GM12878 (cell line): ENCODE measurements at regions of chr4 and their contacts with region 1.

Region 1: GRCh38 chr4:80125252-80126177 is 52.5 kb upstream of the ANTXR2 start:
- DNase-seq: no peak
- ATAC-seq: peak; percentile 78
- H3K4me3 ChIP-seq: no peak overlapping the region
- H3K27ac ChIP-seq: no peak overlapping the region
- H3K4me1 ChIP-seq: no peaks in the 10 kb centered on the region
- H3K27me3 ChIP-seq: no peaks in the 10 kb centered on the region
- CTCF ChIP-seq: peak; percentile 36 to 42 (median 37); a peak in 5 of 6 replicates
- EP300 ChIP-seq: no peak
- POLR2A ChIP-seq: no peak
- RAD21 ChIP-seq: peak; percentile 37

Region 2: DNA sequence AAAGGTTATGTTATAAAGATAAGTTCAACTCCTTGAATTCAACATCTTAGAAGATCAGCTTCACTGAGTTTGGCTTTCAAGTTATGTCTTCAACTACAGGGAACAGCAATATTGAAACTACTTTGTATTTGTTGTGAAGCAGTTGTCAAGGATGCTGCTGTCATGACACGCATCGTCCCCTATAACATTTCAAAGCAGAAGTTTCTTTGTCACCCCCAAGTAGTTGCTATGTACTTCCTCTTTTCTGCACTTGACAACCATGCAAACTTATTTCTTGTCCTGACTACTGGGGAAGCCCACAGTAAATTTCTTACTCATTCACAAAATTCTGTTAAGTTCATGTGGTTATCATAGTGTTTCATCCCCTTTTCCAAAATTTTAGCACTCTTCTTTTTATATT is 66.8 kb before region 1 on chr4:
- CTCF ChIA-PET with region 1: interaction called, 12 read pairs
- POLR2A ChIA-PET with region 1: no interaction called
- RAD21 ChIA-PET with region 1: interaction called, 5 read pairs
- SMC1A ChIA-PET with region 1: interaction called, 6 read pairs
- in situ Hi-C with region 1: no loop called
- intact Hi-C with region 1: no loop called
- DNase-seq: peak; percentile 89
- ATAC-seq: peak; percentile 98
- H3K4me3 ChIP-seq: peak overlapping the region; percentile 42; the same call in 1 of the 2 replicates
- H3K27ac ChIP-seq: peak overlapping the region; percentile 54
- H3K4me1 ChIP-seq: peaks cover 13% of the 10 kb centered on the region
- H3K27me3 ChIP-seq: no peaks in the 10 kb centered on the region
- CTCF ChIP-seq: no peak
- EP300 ChIP-seq: peak; percentile 96 to 100
- POLR2A ChIP-seq: no peak
- RAD21 ChIP-seq: no peak

Region 3: GRCh38 chr4:80072744-80073472 is 52.6 kb before region 1 on chr4 and contains the start of gene ANTXR2:
- CTCF ChIA-PET with region 1: interaction called, 11 read pairs
- POLR2A ChIA-PET with region 1: interaction called, 3 read pairs
- RAD21 ChIA-PET with region 1: interaction called, 17 read pairs
- SMC1A ChIA-PET with region 1: interaction called, 15 read pairs
- in situ Hi-C with region 1: no loop called
- intact Hi-C with region 1: no loop called
- DNase-seq: peak; percentile 41
- ATAC-seq: peak; percentile 81
- H3K4me3 ChIP-seq: peak within 1 kb of the TSS; percentile 95
- H3K27ac ChIP-seq: peak within 1 kb of the TSS; percentile 70
- H3K4me1 ChIP-seq: peaks cover 48% of the 10 kb centered on the region
- H3K27me3 ChIP-seq: no peaks in the 10 kb centered on the region
- CTCF ChIP-seq: no peak
- EP300 ChIP-seq: 0 out of 4 replicates have a peak, but pooled peaks of 1 of the 2 experiments have one; percentile 7
- POLR2A ChIP-seq: peak; percentile 69
- RAD21 ChIP-seq: no peak
- polyA plus RNA-seq, gene ANTXR2: 1.4 to 1.5 TPM

Region 4: DNA sequence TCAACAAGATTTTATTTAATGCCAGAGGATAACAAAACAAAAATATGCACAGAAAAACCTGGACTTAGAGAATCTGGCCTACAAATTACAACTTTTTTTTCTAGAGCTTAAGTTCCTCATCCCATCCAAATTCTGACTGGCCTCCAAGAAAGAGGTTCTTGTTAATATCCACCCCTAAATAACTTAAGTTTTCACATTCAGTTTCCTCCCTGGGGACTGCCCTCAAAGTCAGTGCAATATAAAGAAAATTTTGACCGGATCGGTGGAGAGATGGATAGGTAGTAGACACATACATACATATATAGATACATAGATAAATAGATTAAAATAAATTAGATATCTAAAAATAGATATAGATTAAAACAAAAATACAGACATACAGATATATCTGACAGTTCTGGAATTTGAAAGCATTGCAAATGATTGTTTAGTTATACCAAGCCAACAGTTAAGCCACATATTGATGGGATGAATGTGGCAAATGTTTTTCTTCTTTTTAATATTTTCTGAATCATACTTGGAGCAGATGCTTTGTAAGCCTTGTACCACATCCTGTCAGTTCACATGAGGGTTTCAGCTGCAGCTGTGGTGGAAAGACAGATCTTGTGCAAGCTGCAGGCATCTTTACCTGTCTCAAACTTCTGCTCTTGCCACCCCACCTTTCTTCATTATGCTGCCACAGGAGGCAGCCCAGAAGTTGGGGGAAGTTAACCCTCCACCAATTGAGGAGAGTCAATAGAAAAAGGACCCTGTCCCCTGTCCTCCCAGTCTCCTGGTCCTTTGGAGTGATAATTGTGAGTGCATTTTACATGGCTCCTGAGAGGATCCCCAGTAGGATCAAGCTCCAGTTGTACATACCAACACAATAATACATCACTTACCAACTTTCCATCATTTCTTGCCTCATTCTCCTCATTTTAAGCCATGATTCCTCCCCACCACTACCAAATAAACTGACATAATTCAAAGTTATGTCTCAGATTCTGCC is 13.3 kb after region 1 on chr4:
- CTCF ChIA-PET with region 1: interaction called, 27 read pairs
- POLR2A ChIA-PET with region 1: interaction called, 7 read pairs
- RAD21 ChIA-PET with region 1: interaction called, 9 read pairs
- SMC1A ChIA-PET with region 1: interaction called, 43 read pairs
- in situ Hi-C with region 1: no loop called
- intact Hi-C with region 1: no loop called
- DNase-seq: peak; percentile 12
- ATAC-seq: peak; percentile 90
- H3K4me3 ChIP-seq: no peak overlapping the region
- H3K27ac ChIP-seq: no peak overlapping the region
- H3K4me1 ChIP-seq: peaks cover 3% of the 10 kb centered on the region; the same call in 1 of the 2 replicates
- H3K27me3 ChIP-seq: no peaks in the 10 kb centered on the region
- CTCF ChIP-seq: no peak
- EP300 ChIP-seq: no peak
- POLR2A ChIP-seq: no peak
- RAD21 ChIP-seq: no peak

Region 5: GRCh38 chr4:80153874-80154544 is 28.5 kb after region 1 on chr4:
- CTCF ChIA-PET with region 1: interaction called, 13 read pairs
- POLR2A ChIA-PET with region 1: no interaction called
- RAD21 ChIA-PET with region 1: interaction called, 4 read pairs
- SMC1A ChIA-PET with region 1: interaction called, 3 read pairs
- in situ Hi-C with region 1: no loop called
- intact Hi-C with region 1: no loop called
- DNase-seq: no peak
- ATAC-seq: no peak
- H3K4me3 ChIP-seq: no peak overlapping the region
- H3K27ac ChIP-seq: no peak overlapping the region
- H3K4me1 ChIP-seq: no peaks in the 10 kb centered on the region
- H3K27me3 ChIP-seq: no peaks in the 10 kb centered on the region
- CTCF ChIP-seq: no peak
- EP300 ChIP-seq: no peak
- POLR2A ChIP-seq: no peak
- RAD21 ChIP-seq: no peak

Region 6: GRCh38 chr4:80173401-80173800 is 47.9 kb after region 1 on chr4:
- CTCF ChIA-PET with region 1: interaction called, 12 read pairs
- POLR2A ChIA-PET with region 1: interaction called, 3 read pairs
- RAD21 ChIA-PET with region 1: interaction called, 7 read pairs
- SMC1A ChIA-PET with region 1: interaction called, 20 read pairs
- in situ Hi-C with region 1: no loop called
- intact Hi-C with region 1: no loop called
- DNase-seq: no peak
- ATAC-seq: peak; percentile 97
- H3K4me3 ChIP-seq: no peak overlapping the region
- H3K27ac ChIP-seq: no peak overlapping the region
- H3K4me1 ChIP-seq: peaks cover 15% of the 10 kb centered on the region
- H3K27me3 ChIP-seq: no peaks in the 10 kb centered on the region
- CTCF ChIP-seq: no peak
- EP300 ChIP-seq: 0 out of 4 replicates have a peak, but pooled peaks of 1 of the 2 experiments have one; percentile 4
- POLR2A ChIP-seq: no peak
- RAD21 ChIP-seq: no peak

Region 7: DNA sequence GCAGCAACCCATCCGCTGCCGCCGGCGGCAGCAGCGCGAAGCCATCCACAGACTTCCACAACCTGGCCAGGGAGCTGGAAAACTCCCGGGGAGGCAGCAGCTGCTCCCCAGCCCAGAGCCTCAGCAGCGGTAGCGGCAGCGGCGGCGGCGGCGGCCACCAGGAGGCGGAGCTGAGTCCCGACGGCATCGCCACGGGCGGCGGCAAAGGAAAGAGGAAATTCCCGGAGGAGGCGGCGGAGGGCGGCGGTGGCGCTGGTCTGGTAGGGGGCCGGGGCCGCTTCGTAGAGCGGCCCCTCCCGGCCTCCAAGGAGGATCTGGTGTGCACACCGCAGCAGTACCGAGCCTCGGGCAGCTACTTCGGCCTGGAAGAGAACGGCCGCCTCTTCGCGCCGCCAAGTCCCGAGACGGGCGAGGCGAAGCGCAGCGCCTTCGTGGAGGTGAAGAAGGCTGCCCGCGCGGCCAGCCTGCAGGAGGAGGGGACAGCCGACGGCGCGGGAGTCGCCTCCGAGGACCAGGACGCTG is 76.7 kb after region 1 on chr4:
- CTCF ChIA-PET with region 1: interaction called, 8 read pairs
- POLR2A ChIA-PET with region 1: no interaction called
- RAD21 ChIA-PET with region 1: interaction called, 6 read pairs
- SMC1A ChIA-PET with region 1: no interaction called
- in situ Hi-C with region 1: no loop called
- intact Hi-C with region 1: loop called (anchors 5 kb)
- DNase-seq: no peak
- ATAC-seq: peak; percentile 85
- H3K4me3 ChIP-seq: peak overlapping the region; percentile 71
- H3K27ac ChIP-seq: no peak overlapping the region
- H3K4me1 ChIP-seq: 0 out of 2 replicates have a peak, but pooled peaks cover 3% of the 10 kb centered on the region
- H3K27me3 ChIP-seq: peaks cover 0 to 13% of the 10 kb centered on the region in 2 experiments; a peak in 3 of 4 replicates
- CTCF ChIP-seq: peak; percentile 65 to 81 (median 66)
- EP300 ChIP-seq: no peak
- POLR2A ChIP-seq: no peak
- RAD21 ChIP-seq: peak; percentile 25; the same call in 1 of the 2 replicates

Region 8: DNA sequence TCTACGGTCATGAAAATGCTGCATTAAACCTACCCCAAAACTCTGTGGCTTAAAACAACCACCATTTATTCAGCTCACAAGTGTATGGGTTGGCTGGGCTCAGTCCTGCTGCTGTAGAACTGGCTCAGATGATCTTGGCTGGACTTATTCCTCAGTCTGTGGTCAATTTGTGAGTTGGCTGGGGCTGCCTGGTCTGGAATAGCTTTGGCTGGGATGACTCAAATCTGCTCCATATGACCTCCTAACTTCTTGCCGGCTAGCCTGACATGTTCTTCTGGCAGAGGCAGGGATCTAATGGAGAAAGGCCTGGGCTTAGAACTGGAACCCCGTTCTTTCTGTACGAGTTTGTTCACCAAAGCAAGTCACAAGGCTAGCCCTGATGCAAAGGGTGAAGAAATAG is 281.7 kb after region 1 on chr4:
- CTCF ChIA-PET with region 1: no interaction called
- POLR2A ChIA-PET with region 1: no interaction called
- RAD21 ChIA-PET with region 1: no interaction called
- SMC1A ChIA-PET with region 1: no interaction called
- in situ Hi-C with region 1: no loop called
- intact Hi-C with region 1: no loop called
- DNase-seq: no peak
- ATAC-seq: no peak
- H3K4me3 ChIP-seq: no peak overlapping the region
- H3K27ac ChIP-seq: no peak overlapping the region
- H3K4me1 ChIP-seq: no peaks in the 10 kb centered on the region
- H3K27me3 ChIP-seq: no peaks in the 10 kb centered on the region
- CTCF ChIP-seq: no peak
- EP300 ChIP-seq: no peak
- POLR2A ChIP-seq: no peak
- RAD21 ChIP-seq: no peak